ENCODE measurements at regions of chr18 and their contacts with region 1.

Region 1: DNA sequence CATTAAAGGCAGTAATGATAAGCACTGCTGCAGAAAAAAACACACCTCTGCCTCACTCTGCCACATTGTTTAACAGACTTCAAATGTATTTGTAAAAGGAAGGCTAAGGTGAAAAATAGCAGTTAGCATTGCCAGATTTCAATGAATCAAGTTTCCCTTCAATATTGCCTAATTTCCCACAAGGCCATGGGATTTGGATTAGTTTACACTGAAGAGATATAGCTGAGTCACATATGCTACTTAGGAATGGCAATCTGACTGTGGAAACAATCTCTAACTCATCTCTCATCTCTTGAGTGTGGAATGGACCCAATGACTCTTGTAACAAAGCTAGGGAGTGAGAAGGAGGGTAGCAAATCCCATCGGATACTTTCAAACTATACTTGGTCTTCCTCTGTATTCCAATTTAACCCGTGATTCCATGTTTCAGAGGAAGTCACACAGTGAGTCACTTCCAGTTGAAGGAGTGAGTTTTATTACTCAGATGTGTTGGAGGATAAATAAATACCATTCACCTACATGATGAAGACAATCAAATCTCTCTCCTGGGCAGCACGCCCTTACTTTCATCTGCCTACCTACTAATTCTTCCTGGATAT is 5.1 kb downstream of the B4GALT6 start:
- DNase-seq: no peak
- ATAC-seq: no peak
- H3K4me3 ChIP-seq: peak overlapping the region; percentile 100
- H3K27ac ChIP-seq: peak overlapping the region; percentile 49; the same call in 1 of the 2 replicates
- H3K4me1 ChIP-seq: peaks cover 23% of the 10 kb centered on the region
- H3K27me3 ChIP-seq: no peaks in the 10 kb centered on the region
- CTCF ChIP-seq: no peak
- EP300 ChIP-seq: no peak
- POLR2A ChIP-seq: no peak
- RAD21 ChIP-seq: no peak

Region 2: GRCh38 chr18:31634331-31634713 is 44.9 kb before region 1 on chr18:
- CTCF ChIA-PET with region 1: interaction called, 3 read pairs
- POLR2A ChIA-PET with region 1: interaction called, 4 read pairs
- RAD21 ChIA-PET with region 1: interaction called, 12 read pairs
- SMC1A ChIA-PET with region 1: interaction called, 18 read pairs
- in situ Hi-C with region 1: no loop called
- intact Hi-C with region 1: no loop called
- DNase-seq: peak; percentile 85
- ATAC-seq: peak; percentile 98
- H3K4me3 ChIP-seq: no peak overlapping the region
- H3K27ac ChIP-seq: peak overlapping the region; percentile 70
- H3K4me1 ChIP-seq: peaks cover 35% of the 10 kb centered on the region
- H3K27me3 ChIP-seq: no peaks in the 10 kb centered on the region
- CTCF ChIP-seq: no peak
- EP300 ChIP-seq: peak in 1 of 2 experiments; percentile 51; a peak in 1 of 4 replicates
- POLR2A ChIP-seq: no peak
- RAD21 ChIP-seq: peak; percentile 22; the same call in 1 of the 2 replicates

Region 3: DNA sequence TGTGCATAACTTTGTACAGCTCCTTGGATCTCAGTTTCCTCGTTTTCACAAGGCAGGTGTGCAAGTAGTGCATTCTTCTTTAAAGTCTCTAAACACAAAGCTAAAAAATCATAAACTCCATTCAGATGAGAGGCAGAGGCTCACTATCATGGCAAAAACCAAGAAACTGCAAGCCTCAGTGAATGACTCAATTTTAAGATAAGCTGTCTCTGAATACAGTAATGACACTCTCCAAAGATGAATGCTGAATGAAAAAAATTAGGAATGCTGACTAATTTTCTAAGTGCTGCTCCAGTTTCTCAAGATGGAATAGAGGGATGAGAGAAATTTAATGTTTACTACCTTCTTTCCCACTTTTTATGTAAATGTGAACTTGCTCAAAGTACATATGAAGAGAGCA is 12.0 kb before region 1 on chr18:
- CTCF ChIA-PET with region 1: interaction called, 13 read pairs
- POLR2A ChIA-PET with region 1: interaction called, 8 read pairs
- RAD21 ChIA-PET with region 1: interaction called, 6 read pairs
- SMC1A ChIA-PET with region 1: interaction called, 169 read pairs
- in situ Hi-C with region 1: no loop called
- intact Hi-C with region 1: no loop called
- DNase-seq: no peak
- ATAC-seq: no peak
- H3K4me3 ChIP-seq: no peak overlapping the region
- H3K27ac ChIP-seq: no peak overlapping the region
- H3K4me1 ChIP-seq: no peaks in the 10 kb centered on the region
- H3K27me3 ChIP-seq: no peaks in the 10 kb centered on the region
- CTCF ChIP-seq: no peak
- EP300 ChIP-seq: no peak
- POLR2A ChIP-seq: no peak
- RAD21 ChIP-seq: no peak

Measured in GM12878 (cell line).